AG04450 (cell line): ENCODE measurements at regions of chr1 and their contacts with region 1.

Region 1: GRCh38 chr1:66446261-66447001 is 87.5 kb upstream of the SGIP1 start:
- DNase-seq: no peak
- H3K4me3 ChIP-seq: no peak overlapping the region
- H3K27ac ChIP-seq: no peak overlapping the region
- H3K27me3 ChIP-seq: no peaks in the 10 kb centered on the region
- CTCF ChIP-seq: peak; percentile 85

Region 2: DNA sequence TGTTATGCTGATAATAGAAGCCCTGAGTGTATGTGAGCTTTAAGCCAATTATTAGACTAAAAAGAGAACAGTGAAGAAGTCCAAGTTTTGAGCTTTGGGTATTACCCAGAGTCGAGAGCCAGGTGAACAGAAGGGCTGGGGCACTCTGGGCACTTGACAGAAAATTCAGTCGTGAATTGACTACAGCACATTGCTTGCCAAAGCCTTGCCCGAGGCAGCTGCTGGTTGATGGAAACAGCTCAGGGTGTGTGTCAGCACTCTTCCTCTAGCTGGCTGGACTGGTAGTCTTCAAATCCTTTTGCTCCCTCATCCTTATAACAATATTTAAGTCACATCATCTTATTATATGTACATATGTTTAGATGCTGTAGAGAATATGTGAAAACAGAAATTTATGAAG is 632.5 kb before region 1 on chr1:
- CTCF ChIA-PET with region 1: interaction called, 11 read pairs
- POLR2A ChIA-PET with region 1: no interaction called
- DNase-seq: no peak
- H3K4me3 ChIP-seq: no peak overlapping the region
- H3K27ac ChIP-seq: no peak overlapping the region
- H3K27me3 ChIP-seq: no peaks in the 10 kb centered on the region
- CTCF ChIP-seq: no peak

Region 3: GRCh38 chr1:66271216-66271903 is 175.1 kb before region 1 on chr1:
- CTCF ChIA-PET with region 1: interaction called, 11 read pairs
- POLR2A ChIA-PET with region 1: no interaction called
- DNase-seq: peak; percentile 97
- H3K4me3 ChIP-seq: peak overlapping the region; percentile 35
- H3K27ac ChIP-seq: peak overlapping the region; percentile 97
- H3K27me3 ChIP-seq: no peaks in the 10 kb centered on the region
- CTCF ChIP-seq: no peak

Region 4: DNA sequence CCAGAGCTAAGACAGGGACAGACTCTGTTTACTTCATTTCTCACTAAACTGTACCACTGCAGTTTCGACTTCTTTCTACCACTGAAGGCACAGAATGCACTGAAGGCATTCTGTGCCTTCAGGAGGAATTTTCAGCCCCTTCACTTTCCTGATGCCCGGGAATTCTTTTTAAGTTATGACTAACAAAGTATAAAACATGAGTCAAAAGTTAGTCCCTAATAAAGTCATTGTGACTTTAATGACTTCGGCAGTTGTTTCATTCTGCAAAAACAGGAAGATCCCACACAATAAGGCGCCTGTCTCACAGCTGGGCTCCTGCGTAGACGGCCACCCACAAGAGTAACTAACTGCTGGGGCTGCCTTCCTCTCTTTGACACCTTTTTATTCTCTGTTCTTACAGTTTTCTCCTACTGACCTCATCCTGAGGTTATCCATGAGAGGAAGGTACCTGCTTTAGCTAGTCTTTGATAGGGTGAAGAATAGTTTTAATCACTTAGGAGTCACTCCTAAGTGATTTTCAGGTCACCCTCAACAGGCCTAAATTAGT is 96.4 kb before region 1 on chr1:
- CTCF ChIA-PET with region 1: interaction called, 13 read pairs
- POLR2A ChIA-PET with region 1: no interaction called
- DNase-seq: no peak
- H3K4me3 ChIP-seq: no peak overlapping the region
- H3K27ac ChIP-seq: peak overlapping the region; percentile 25
- H3K27me3 ChIP-seq: no peaks in the 10 kb centered on the region
- CTCF ChIP-seq: no peak

Region 5: GRCh38 chr1:66464802-66465201 is 18.4 kb after region 1 on chr1:
- CTCF ChIA-PET with region 1: interaction called, 13 read pairs
- POLR2A ChIA-PET with region 1: no interaction called
- DNase-seq: peak; percentile 92
- H3K4me3 ChIP-seq: no peak overlapping the region
- H3K27ac ChIP-seq: peak overlapping the region; percentile 94
- H3K27me3 ChIP-seq: no peaks in the 10 kb centered on the region
- CTCF ChIP-seq: no peak

Region 6: DNA sequence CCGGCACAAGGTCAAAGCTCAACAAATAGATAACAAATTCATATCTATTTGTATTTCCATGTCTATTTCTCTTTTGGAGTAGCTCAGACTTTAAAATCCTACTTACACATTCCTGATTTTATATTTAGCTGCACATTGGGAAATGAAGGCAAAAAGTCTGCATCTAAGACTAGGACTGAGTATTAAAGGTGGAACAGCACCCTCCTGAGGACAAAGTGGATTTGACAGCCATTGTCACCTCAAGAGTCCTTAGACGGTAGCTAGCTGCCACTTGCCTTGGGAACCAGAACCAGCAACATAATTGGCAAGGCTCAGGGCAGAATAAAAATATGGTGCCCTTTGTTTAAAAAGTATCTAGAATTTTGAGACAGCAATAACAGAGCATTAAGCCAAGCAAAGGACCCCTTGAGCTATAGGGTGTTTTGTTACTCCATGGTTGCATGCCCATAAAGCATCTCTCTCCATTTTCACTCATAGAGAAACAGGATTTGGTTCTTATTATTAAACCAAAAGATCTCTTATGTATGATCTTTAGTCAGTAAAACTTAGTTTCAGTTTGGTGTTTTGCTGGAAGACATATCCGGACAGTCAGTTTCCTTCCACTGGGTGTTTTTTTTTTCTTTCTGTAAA is 57.5 kb after region 1 on chr1:
- CTCF ChIA-PET with region 1: interaction called, 92 read pairs
- POLR2A ChIA-PET with region 1: interaction called, 3 read pairs
- DNase-seq: no peak
- H3K4me3 ChIP-seq: no peak overlapping the region
- H3K27ac ChIP-seq: no peak overlapping the region
- H3K27me3 ChIP-seq: no peaks in the 10 kb centered on the region
- CTCF ChIP-seq: peak; percentile 74

Region 7: GRCh38 chr1:66598670-66599069 is 152.2 kb after region 1 on chr1:
- CTCF ChIA-PET with region 1: no interaction called
- POLR2A ChIA-PET with region 1: no interaction called
- DNase-seq: peak; percentile 59
- H3K4me3 ChIP-seq: no peak overlapping the region
- H3K27ac ChIP-seq: no peak overlapping the region
- H3K27me3 ChIP-seq: no peaks in the 10 kb centered on the region
- CTCF ChIP-seq: no peak